ENCODE measurements at regions of chr18 and their contacts with region 1.

Region 1: GRCh38 chr18:21134898-21135297 is 23.3 kb upstream of the ROCK1 start:
- DNase-seq: no peak

Region 2: DNA sequence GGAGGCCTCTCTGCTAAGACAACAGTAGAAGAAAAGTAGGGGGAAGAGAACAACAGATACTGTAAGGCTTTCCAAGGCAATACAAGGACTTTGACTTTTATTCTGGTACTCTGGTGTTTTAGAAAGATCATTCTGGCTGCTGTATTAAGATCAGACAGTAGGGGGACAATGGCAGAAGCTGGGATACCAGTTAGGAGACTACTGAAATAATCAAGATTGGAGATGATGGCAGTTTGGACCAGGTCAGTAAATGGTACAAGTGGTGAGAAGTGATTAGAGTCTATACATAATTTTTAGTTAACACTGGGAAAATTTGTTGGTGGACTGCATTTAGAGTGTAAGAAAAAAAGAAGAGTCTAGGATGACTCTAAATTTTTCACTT is 163.0 kb before region 1 on chr18:
- intact Hi-C with region 1: loop called (anchors 5 kb)
- DNase-seq: no peak

Region 3: DNA sequence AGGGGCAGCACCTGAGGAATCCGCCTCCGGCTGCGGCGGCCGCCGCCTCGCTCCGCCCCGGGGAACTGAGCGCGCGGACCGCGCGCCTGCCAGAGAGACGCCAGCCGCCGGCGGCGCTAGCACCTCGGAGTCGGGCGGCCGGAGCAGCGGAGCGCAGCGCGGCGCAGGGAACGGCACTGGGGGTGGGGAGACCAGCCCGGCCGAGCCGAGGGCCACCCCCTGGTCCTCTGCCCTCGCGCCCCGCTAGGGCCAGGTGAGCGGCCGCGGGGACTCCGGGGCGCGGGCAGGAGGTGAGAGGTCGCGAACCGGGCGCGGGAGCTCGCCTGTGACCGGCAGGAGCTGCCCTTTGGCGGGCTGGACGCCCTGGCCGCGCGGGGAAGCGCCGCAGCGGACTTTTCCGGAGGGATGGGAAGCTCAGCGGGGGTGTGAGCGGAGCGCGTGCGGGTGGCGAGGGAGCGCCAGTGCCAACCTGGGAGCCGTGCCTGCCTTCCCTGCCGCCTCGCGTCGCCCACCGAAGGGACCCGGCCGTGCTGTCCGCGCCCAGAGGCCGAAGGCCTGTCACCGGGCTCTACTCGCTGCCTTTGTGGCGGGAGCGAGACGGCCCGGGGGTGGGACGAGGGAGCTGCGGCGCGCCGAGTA is 107.4 kb after region 1 on chr18 and contains the start of gene GREB1L:
- intact Hi-C with region 1: no loop called
- DNase-seq: no peak
- total RNA-seq, gene GREB1L: 16.2 TPM